HepG2 (cell line): ENCODE measurements at regions of chr11 and their contacts with region 1.

Region 1: GRCh38 chr11:84775503-84775902 is 851.6 kb downstream of the DLG2 start:
- DNase-seq: no peak
- ATAC-seq: no peak
- H3K4me3 ChIP-seq: no peak overlapping the region
- H3K27ac ChIP-seq: no peak overlapping the region
- H3K4me1 ChIP-seq: no peaks in the 10 kb centered on the region
- H3K27me3 ChIP-seq: no peaks in the 10 kb centered on the region
- CTCF ChIP-seq: no peak
- EP300 ChIP-seq: no peak
- POLR2A ChIP-seq: no peak
- RAD21 ChIP-seq: no peak

Region 2: DNA sequence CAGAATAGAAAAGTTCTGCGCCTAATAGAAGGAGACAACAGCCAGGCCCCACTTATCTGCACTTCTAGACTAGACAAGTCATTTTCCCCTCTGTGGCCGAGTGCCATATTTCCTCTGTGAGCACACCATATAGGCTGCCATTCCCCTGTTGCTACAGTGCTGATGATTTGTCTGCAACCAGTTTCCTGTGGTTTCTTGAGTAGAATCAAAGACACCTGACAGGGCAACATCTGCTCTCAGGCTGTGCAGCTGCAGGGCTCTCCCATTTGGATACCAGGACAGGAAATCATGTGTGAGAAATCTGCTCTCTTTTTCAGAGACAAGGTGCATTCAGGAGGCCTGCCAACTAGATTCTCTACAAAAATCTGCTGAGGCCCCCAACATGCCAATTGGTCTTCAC is 27.6 kb before region 1 on chr11:
- CTCF ChIA-PET with region 1: no interaction called
- POLR2A ChIA-PET with region 1: no interaction called
- in situ Hi-C with region 1: no loop called
- intact Hi-C with region 1: no loop called
- DNase-seq: no peak
- ATAC-seq: no peak
- H3K4me3 ChIP-seq: no peak overlapping the region
- H3K27ac ChIP-seq: no peak overlapping the region
- H3K4me1 ChIP-seq: no peaks in the 10 kb centered on the region
- H3K27me3 ChIP-seq: no peaks in the 10 kb centered on the region
- CTCF ChIP-seq: no peak
- EP300 ChIP-seq: no peak
- POLR2A ChIP-seq: no peak
- RAD21 ChIP-seq: no peak

Region 3: GRCh38 chr11:84819128-84819527 is 43.6 kb after region 1 on chr11:
- CTCF ChIA-PET with region 1: no interaction called
- POLR2A ChIA-PET with region 1: no interaction called
- in situ Hi-C with region 1: no loop called
- intact Hi-C with region 1: loop called (anchors 1 kb)
- DNase-seq: no peak
- ATAC-seq: no peak
- H3K4me3 ChIP-seq: no peak overlapping the region
- H3K27ac ChIP-seq: no peak overlapping the region
- H3K4me1 ChIP-seq: no peaks in the 10 kb centered on the region
- H3K27me3 ChIP-seq: no peaks in the 10 kb centered on the region; a peak in 1 of 5 replicates
- CTCF ChIP-seq: no peak
- EP300 ChIP-seq: no peak
- POLR2A ChIP-seq: no peak
- RAD21 ChIP-seq: no peak